SK-N-SH (cell line): ENCODE measurements at regions of chr7 and their contacts with region 1.

Region 1: GRCh38 chr7:105429746-105430612 is 41.3 kb upstream of the SRPK2 start:
- DNase-seq: peak; percentile 55
- H3K4me3 ChIP-seq: no peak overlapping the region
- H3K27ac ChIP-seq: no peak overlapping the region; a peak in 1 of 4 replicates
- H3K4me1 ChIP-seq: no peaks in the 10 kb centered on the region
- H3K27me3 ChIP-seq: no peaks in the 10 kb centered on the region
- CTCF ChIP-seq: peak; percentile 72
- EP300 ChIP-seq: no peak
- RAD21 ChIP-seq: peak; percentile 74

Region 2: GRCh38 chr7:105219780-105220160 is 210.2 kb before region 1 on chr7:
- CTCF ChIA-PET with region 1: no interaction called
- POLR2A ChIA-PET with region 1: no interaction called
- DNase-seq: no peak
- H3K4me3 ChIP-seq: no peak overlapping the region
- H3K27ac ChIP-seq: peak overlapping the region in 1 of 2 experiments; percentile 62; a peak in 2 of 4 replicates
- H3K4me1 ChIP-seq: peaks cover 6 to 35% of the 10 kb centered on the region in 2 experiments; a peak in 3 of 4 replicates
- H3K27me3 ChIP-seq: no peaks in the 10 kb centered on the region
- CTCF ChIP-seq: no peak
- EP300 ChIP-seq: peak in 1 of 2 experiments; percentile 23; a peak in 1 of 4 replicates
- RAD21 ChIP-seq: no peak

Region 3: DNA sequence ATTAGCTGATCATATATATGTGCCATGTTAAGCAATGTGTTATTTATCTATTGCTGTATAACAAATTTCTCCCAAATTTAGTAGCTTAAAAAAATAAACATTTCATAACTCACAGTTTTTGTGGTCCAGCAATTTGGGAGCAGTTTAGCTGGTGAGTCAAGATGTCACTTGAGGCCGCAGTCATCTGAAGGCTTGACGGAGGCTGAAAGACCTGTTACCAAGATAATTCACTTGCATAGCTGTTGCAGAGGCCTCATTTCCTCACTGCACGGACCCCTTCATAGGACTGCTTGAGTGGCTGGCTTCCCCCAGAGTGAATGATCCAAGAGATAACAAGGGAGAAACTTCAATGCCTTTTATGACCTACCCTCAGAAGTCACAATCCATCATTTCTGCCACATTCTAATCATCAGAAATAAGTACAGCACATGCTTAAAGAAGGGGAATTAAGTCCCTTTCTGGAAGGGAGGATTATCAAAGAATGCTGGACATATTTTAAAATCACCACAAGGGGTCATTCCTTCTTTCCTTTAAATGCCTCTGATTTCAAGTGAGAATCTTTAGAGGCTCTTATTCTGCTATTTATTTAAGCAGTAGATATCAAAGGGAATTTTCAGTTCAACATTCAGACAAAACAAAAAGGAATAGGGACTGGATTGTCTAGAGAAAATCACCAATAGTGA is 30.8 kb before region 1 on chr7:
- CTCF ChIA-PET with region 1: interaction called, 15 read pairs
- POLR2A ChIA-PET with region 1: no interaction called
- DNase-seq: peak; percentile 51
- H3K4me3 ChIP-seq: no peak overlapping the region
- H3K27ac ChIP-seq: no peak overlapping the region
- H3K4me1 ChIP-seq: no peaks in the 10 kb centered on the region; a peak in 2 of 4 replicates
- H3K27me3 ChIP-seq: no peaks in the 10 kb centered on the region
- CTCF ChIP-seq: peak; percentile 70
- EP300 ChIP-seq: no peak
- RAD21 ChIP-seq: peak; percentile 69

Region 4: GRCh38 chr7:105444342-105444987 is 14.5 kb after region 1 on chr7:
- CTCF ChIA-PET with region 1: interaction called, 25 read pairs
- POLR2A ChIA-PET with region 1: no interaction called
- DNase-seq: no peak
- H3K4me3 ChIP-seq: no peak overlapping the region
- H3K27ac ChIP-seq: no peak overlapping the region
- H3K4me1 ChIP-seq: peaks cover 0 to 4% of the 10 kb centered on the region in 2 experiments; a peak in 1 of 4 replicates
- H3K27me3 ChIP-seq: no peaks in the 10 kb centered on the region
- CTCF ChIP-seq: no peak
- EP300 ChIP-seq: no peak
- RAD21 ChIP-seq: no peak

Region 5: GRCh38 chr7:105522062-105522936 is 92.3 kb after region 1 on chr7 and contains the start of gene PUS7:
- CTCF ChIA-PET with region 1: no interaction called
- POLR2A ChIA-PET with region 1: no interaction called
- DNase-seq: peak; percentile 99
- H3K4me3 ChIP-seq: peak within 1 kb of the TSS; percentile 61 to 90
- H3K27ac ChIP-seq: peak within 1 kb of the TSS; percentile 79 to 81
- H3K4me1 ChIP-seq: peaks cover 3 to 5% of the 10 kb centered on the region in 2 experiments; a peak in 1 of 4 replicates
- H3K27me3 ChIP-seq: no peaks in the 10 kb centered on the region
- CTCF ChIP-seq: no peak
- EP300 ChIP-seq: no peak
- RAD21 ChIP-seq: no peak; the same call in 1 of the 2 replicates
- polyA plus RNA-seq, gene PUS7: 18.8 and 22.6 TPM in 2 replicates